Caco-2 (cell line): ENCODE measurements at regions of chr12 and their contacts with region 1.

Region 1: DNA sequence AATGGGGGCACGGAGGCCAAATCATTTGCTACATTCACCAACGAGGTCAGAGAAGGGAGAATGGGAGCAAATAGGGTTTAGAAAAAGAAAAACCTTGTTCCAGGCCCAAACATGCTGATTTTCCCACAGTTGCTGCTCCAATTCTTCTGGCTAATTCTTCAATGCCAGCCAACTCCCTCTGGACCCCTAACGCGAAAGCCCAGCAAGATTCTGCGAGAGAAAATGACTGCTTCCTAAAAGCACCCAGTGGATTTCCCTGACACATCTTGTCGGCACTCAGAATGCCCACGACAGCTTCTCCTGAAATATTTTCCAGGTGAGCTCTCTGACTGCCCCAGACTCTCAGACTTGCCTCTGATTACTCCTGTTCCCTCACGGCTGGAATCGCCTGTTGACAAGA is 689.4 kb downstream of the MED13L start:
- DNase-seq: no peak
- H3K4me3 ChIP-seq: no peak overlapping the region
- H3K4me3 Mint-ChIP-seq: no peak overlapping the region
- H3K27ac Mint-ChIP-seq: no peak overlapping the region
- H3K4me1 ChIP-seq: no peaks in the 10 kb centered on the region
- H3K4me1 Mint-ChIP-seq: no peaks in the 10 kb centered on the region
- H3K27me3 ChIP-seq: no peaks in the 10 kb centered on the region
- H3K27me3 Mint-ChIP-seq: peaks cover 5% of the 10 kb centered on the region
- CTCF ChIP-seq: no peak

Region 2: GRCh38 chr12:114123108-114123507 is 1465.0 kb before region 1 on chr12:
- CTCF ChIA-PET with region 1: no interaction called
- POLR2A ChIA-PET with region 1: interaction called, 11 read pairs
- intact Hi-C with region 1: no loop called
- DNase-seq: no peak
- H3K4me3 ChIP-seq: no peak overlapping the region
- H3K4me3 Mint-ChIP-seq: no peak overlapping the region
- H3K27ac Mint-ChIP-seq: no peak overlapping the region
- H3K4me1 ChIP-seq: no peaks in the 10 kb centered on the region
- H3K4me1 Mint-ChIP-seq: no peaks in the 10 kb centered on the region
- H3K27me3 ChIP-seq: no peaks in the 10 kb centered on the region
- H3K27me3 Mint-ChIP-seq: no peaks in the 10 kb centered on the region
- CTCF ChIP-seq: no peak

Region 3: GRCh38 chr12:115697340-115697739 is 109.2 kb after region 1 on chr12:
- CTCF ChIA-PET with region 1: no interaction called
- POLR2A ChIA-PET with region 1: no interaction called
- intact Hi-C with region 1: no loop called
- DNase-seq: no peak
- H3K4me3 ChIP-seq: no peak overlapping the region
- H3K4me3 Mint-ChIP-seq: no peak overlapping the region
- H3K27ac Mint-ChIP-seq: no peak overlapping the region
- H3K4me1 ChIP-seq: no peaks in the 10 kb centered on the region
- H3K4me1 Mint-ChIP-seq: no peaks in the 10 kb centered on the region
- H3K27me3 ChIP-seq: no peaks in the 10 kb centered on the region
- H3K27me3 Mint-ChIP-seq: peaks cover 3% of the 10 kb centered on the region
- CTCF ChIP-seq: no peak